HEK293T (cell line): ENCODE measurements at regions of chr18 and their contacts with region 1.

Region 1: DNA sequence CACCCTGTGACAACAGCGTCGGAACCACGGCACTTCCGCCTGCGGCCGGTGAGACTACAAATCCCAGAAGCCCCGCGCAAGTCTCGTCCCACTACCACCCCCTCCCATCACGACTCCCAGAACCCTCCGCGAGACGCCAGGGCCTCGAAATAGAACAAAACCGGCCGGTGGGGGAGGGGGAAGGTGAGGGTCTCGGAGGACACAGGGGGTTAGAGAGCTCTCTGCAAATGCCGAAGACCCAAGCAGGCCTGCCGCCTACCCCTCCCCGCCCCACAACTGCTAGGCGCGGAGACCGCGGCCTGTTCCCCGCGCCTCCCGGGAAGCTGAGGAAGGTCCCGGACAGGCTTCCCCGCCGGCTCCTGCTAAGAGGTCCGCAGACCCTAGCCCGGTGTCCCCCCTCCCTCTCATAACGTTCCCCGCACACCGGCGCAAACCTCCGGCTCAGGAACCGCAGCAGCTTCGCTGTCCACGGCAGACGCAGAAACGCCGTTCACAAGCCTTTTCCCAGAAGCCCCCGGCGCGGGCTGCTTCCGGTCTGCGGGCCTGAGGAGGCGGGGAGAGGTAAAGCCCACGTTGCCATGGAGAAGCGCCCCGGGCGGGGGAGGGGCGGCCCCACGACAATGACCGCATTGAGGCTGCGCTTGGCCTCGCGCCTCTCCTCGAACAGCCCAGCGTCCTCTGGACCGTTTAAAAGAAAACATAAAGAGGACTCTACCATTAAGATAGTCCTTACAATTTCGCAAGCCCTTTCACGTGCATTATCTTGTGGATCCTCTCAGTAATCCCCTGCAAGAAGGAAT is at the start of gene ZNF24:
- DNase-seq: peak; percentile 100

Region 2: DNA sequence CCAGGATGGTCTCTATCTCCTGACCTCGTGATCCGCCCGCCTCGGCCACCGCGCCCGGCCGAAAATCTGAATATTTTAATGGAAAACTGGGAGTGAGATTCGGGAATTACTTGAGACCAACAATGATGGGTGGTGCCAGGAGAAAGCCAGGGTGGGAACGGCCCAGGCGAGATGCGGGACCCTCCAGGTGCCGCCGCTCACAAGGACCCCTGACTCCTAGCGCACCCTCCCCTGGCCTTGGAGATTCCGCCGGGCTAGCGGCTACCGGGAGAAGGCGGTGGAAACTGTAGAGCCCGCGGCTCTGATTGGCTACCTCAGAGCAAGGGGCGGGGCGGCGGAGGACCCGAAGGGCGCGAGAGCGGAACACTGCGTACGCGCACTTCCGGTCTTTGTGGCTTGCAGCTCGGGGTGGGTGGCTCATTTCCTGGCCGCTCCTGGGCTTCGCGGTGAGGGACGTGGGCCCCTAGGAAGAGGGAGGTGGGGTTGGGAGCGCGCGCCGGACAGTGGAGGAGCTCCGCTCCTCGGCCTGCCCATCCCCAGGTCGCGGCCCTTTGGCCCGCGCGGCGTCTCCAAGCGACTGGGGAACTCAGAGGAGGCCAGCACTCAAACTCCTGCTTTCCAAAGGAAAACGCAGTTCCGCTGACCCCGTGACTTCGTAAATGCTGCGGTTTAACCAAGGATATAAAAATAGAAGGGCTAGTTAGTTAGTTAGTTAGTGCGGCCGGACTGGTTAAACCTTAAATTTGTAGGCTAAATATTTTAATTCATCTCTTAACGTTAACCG is 103.3 kb before region 1 on chr18 and contains the start of gene ZNF397:
- CTCF ChIA-PET with region 1: no interaction called
- POLR2A ChIA-PET with region 1: interaction called, 14 read pairs
- DNase-seq: peak; percentile 100

Region 3: DNA sequence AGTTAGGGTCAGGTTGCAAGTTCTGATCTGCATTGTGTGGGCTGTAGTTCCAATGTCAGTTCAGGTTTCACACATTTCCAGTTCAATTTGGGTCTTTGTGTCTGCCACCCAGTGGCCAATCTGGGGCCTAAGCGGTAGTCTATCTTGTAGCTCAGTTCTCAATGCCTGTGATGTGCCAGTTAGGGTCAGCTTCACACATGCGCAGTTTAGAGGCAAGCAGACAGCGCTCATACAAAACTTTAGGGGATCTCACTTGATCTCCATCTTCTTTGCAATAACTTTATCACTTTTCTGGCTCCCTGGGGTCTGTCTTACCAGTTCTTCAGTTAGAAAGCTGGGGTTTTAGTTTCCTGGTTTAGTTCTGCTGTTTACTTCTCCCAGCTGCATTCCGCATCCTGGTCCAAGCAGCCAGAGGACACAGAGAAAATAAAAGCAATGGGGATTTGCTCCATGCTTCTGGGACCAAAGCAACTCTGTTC is 11.0 kb after region 1 on chr18:
- CTCF ChIA-PET with region 1: interaction called, 19 read pairs
- POLR2A ChIA-PET with region 1: interaction called, 5 read pairs
- DNase-seq: peak; percentile 87

Region 4: GRCh38 chr18:35407871-35408481 is 63.8 kb after region 1 on chr18:
- CTCF ChIA-PET with region 1: no interaction called
- POLR2A ChIA-PET with region 1: no interaction called
- DNase-seq: peak; percentile 82